ENCODE measurements at regions of chr4 and their contacts with region 1.

Region 1: GRCh38 chr4:37795581-37796195 is 30.8 kb upstream of the PGM2 start:
- DNase-seq: no peak
- ATAC-seq: no peak

Region 2: GRCh38 chr4:37584071-37584470 is 211.6 kb before region 1 on chr4:
- intact Hi-C with region 1: no loop called
- DNase-seq: no peak
- ATAC-seq: no peak

Region 3: GRCh38 chr4:37603070-37603468 is 192.6 kb before region 1 on chr4:
- intact Hi-C with region 1: loop called (anchors 5 kb)
- DNase-seq: peak; percentile 93
- ATAC-seq: peak; percentile 96

Region 4: GRCh38 chr4:39571054-39571453 is 1775.4 kb after region 1 on chr4:
- intact Hi-C with region 1: no loop called
- DNase-seq: no peak
- ATAC-seq: no peak

Measured in sciatic nerve (tissue), 2 donors.